ENCODE measurements at regions of chr1 and their contacts with region 1.

Region 1: DNA sequence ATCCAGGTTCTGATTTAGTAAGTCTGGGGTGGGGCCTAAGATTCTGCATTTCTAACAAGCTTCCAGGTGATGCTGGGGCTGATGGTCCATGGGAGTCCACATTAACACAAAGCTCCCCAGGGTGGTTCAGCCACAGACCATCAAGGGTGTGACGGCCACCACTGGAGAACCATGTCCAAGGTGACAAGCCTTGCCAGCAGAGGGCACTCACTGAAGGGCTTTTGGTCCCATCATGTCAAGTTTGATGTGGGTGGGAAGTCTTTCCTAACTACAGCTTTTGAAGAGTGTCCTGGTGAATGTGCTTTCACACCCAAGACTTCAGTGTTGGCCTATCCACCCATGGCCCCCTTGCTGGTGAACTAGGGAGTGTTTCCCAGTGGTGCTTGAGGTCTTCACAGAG is 67.1 kb downstream of the UBE2T start:
- DNase-seq: peak in 8 of 9 experiments; percentile 30 to 69 (median 51)
- ATAC-seq: no peak
- H3K4me3 ChIP-seq: no peak overlapping the region
- H3K4me3 Mint-ChIP-seq: no peak overlapping the region
- H3K27ac ChIP-seq: no peak overlapping the region
- H3K27ac Mint-ChIP-seq: no peak overlapping the region
- H3K4me1 ChIP-seq: no peaks in the 10 kb centered on the region
- H3K4me1 Mint-ChIP-seq: no peaks in the 10 kb centered on the region
- H3K27me3 ChIP-seq: no peaks in the 10 kb centered on the region
- H3K27me3 Mint-ChIP-seq: peaks cover 5% of the 10 kb centered on the region
- CTCF ChIP-seq: no peak

Region 2: DNA sequence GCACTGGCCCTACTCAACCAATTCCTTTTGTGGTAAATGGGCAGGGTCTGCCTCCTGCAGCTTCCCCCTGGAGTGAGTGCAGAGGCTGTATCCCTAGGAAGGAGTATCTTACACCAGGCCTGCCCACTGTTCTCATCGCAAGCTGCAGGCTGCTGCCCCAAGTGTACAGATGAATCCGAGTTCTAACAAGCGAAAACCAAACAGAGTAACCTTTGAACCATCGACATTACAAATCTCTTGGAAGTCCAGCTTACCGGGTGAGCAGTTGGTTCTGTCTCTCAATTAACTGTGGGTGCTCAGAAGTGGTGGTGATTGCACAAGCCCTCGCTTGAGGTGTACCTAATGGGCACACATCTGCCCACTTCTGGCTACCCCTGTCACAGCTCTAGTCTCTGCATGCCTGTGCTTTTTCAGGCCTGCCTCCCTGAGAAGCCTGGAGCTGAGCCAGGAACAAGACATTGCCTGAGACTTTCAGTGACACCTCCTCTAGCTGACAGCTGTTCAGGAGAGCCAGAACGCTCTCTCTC is 1357.3 kb before region 1 on chr1:
- CTCF ChIA-PET with region 1: no interaction called
- POLR2A ChIA-PET with region 1: no interaction called
- intact Hi-C with region 1: no loop called
- DNase-seq: no peak
- ATAC-seq: no peak
- H3K4me3 ChIP-seq: no peak overlapping the region
- H3K4me3 Mint-ChIP-seq: no peak overlapping the region
- H3K27ac ChIP-seq: no peak overlapping the region
- H3K27ac Mint-ChIP-seq: no peak overlapping the region
- H3K4me1 ChIP-seq: no peaks in the 10 kb centered on the region
- H3K4me1 Mint-ChIP-seq: no peaks in the 10 kb centered on the region
- H3K27me3 ChIP-seq: no peaks in the 10 kb centered on the region
- H3K27me3 Mint-ChIP-seq: no peaks in the 10 kb centered on the region
- CTCF ChIP-seq: no peak

Region 3: DNA sequence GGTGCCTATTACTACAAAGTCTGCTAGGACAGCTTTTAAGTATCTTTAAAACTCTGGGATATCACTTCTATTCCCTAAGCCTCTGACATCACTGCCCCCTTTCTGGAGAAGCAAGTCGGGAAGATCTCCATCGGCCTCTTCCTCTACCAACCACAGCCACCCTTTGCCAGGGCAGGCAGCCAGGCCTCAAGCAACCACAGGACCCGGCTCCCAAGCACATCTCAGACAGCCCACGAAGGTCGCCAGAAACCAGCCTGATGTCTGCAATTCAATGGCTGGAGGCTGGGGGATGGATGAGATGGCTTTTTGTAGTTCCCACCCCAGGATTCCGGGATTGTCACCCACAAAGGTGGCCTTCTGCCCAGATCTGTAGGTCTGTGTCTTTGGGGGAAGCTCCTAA is 10.3 kb before region 1 on chr1:
- CTCF ChIA-PET with region 1: interaction called, 11 read pairs
- POLR2A ChIA-PET with region 1: interaction called, 3 read pairs
- intact Hi-C with region 1: no loop called
- DNase-seq: no peak
- ATAC-seq: no peak
- H3K4me3 ChIP-seq: no peak overlapping the region
- H3K4me3 Mint-ChIP-seq: no peak overlapping the region
- H3K27ac ChIP-seq: no peak overlapping the region
- H3K27ac Mint-ChIP-seq: no peak overlapping the region
- H3K4me1 ChIP-seq: no peaks in the 10 kb centered on the region
- H3K4me1 Mint-ChIP-seq: no peaks in the 10 kb centered on the region
- H3K27me3 ChIP-seq: no peaks in the 10 kb centered on the region
- H3K27me3 Mint-ChIP-seq: peaks cover 38% of the 10 kb centered on the region
- CTCF ChIP-seq: no peak

Region 4: GRCh38 chr1:202291961-202292712 is 17.5 kb after region 1 on chr1:
- CTCF ChIA-PET with region 1: interaction called, 17 read pairs
- POLR2A ChIA-PET with region 1: no interaction called
- intact Hi-C with region 1: loop called in 1 of 2 experiments (anchors 2 kb)
- DNase-seq: no peak
- ATAC-seq: no peak
- H3K4me3 ChIP-seq: no peak overlapping the region
- H3K4me3 Mint-ChIP-seq: no peak overlapping the region
- H3K27ac ChIP-seq: no peak overlapping the region
- H3K27ac Mint-ChIP-seq: no peak overlapping the region
- H3K4me1 ChIP-seq: peaks cover 17% of the 10 kb centered on the region
- H3K4me1 Mint-ChIP-seq: peaks cover 20% of the 10 kb centered on the region
- H3K27me3 ChIP-seq: no peaks in the 10 kb centered on the region
- H3K27me3 Mint-ChIP-seq: no peaks in the 10 kb centered on the region
- CTCF ChIP-seq: no peak

Region 5: DNA sequence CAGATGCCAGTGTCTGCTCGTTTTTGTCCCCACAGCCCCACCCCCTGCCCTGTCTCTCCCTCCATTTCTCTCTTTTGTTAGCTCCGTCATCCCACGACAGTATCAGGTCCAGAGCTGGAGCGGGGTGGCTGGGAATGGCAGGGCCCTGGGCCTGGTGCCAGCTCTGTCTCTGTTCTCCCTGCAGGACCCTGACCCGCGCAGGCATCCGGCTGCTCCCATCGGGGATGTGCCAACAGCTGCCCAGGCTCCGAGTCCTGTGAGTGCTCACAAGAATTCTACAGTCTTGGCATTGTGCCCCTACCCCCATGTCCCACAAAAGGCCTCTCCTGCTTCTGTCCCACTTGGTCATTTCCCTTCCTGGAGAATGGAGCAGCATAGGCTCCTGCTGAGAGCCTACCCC is 29.8 kb after region 1 on chr1:
- CTCF ChIA-PET with region 1: interaction called, 15 read pairs
- POLR2A ChIA-PET with region 1: no interaction called
- intact Hi-C with region 1: no loop called
- DNase-seq: no peak
- ATAC-seq: no peak
- H3K4me3 ChIP-seq: no peak overlapping the region
- H3K4me3 Mint-ChIP-seq: no peak overlapping the region
- H3K27ac ChIP-seq: no peak overlapping the region
- H3K27ac Mint-ChIP-seq: no peak overlapping the region
- H3K4me1 ChIP-seq: no peaks in the 10 kb centered on the region
- H3K4me1 Mint-ChIP-seq: no peaks in the 10 kb centered on the region
- H3K27me3 ChIP-seq: no peaks in the 10 kb centered on the region
- H3K27me3 Mint-ChIP-seq: no peaks in the 10 kb centered on the region
- CTCF ChIP-seq: no peak

Measured in CD8-positive, alpha-beta T cell (primary cell).